ENCODE measurements at regions of chr2 and their contacts with region 1.

Region 1: DNA sequence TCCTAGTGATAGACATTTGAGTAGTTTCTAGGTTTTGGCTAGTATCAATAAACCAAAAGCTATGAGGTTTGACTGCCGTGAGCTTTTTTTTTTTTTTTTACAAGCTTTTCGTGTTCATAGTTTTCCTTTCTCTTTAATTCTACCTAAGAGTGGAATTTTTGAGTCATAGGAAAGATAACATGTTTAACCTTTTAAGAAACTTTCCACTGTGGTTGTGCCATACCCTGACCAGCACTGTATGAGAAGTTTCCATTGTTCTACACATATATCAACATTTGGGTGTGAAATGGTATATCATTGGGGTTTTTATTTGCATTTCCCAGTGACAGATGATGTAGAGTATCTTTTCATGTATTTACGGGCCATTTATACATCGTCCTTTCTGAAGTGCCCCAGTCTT is 31.7 kb downstream of the UBE2F start:
- DNase-seq: peak; percentile 80
- H3K4me3 Mint-ChIP-seq: peak overlapping the region; percentile 69
- H3K27ac Mint-ChIP-seq: peak overlapping the region; percentile 97
- H3K4me1 Mint-ChIP-seq: peaks cover 44% of the 10 kb centered on the region
- H3K27me3 Mint-ChIP-seq: peaks cover 2% of the 10 kb centered on the region

Region 2: DNA sequence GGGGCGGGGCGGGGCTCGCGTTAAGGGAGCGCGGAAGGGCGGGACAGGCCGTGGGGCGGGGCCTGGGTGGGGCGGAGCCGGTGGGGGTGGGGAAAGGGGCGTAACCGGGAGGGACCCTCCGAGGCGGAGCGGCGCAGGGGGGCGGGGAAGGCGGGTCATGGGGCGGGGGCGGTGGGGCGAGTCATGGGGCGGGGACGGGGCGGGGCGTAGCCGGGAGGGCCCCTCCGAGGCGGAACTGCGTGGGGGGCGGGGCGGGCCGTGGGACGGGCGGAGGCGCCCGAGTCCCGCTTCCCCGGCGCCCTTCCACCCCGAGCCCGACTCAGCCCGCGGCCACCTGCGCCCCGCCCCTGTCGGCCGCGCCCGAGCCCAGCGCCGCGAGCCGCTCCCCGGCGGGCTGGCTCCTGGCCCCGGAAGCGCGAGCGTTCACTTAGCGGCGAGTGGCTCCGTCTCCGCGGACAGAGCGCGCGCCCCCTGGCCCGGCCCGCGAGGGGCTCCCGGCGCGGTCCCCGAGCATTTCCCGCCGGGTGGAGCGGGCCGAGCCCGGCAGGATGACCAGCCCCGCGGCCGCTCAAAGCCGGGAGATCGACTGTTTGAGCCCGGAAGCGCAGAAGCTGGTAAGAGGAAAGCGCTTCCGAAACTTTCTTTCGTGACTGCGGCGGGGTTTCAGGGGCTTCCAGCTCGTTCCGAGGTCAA is 306.5 kb before region 1 on chr2:
- intact Hi-C with region 1: loop called (anchors 5 kb)
- DNase-seq: peak; percentile 98
- H3K4me3 Mint-ChIP-seq: peak overlapping the region; percentile 99
- H3K27ac Mint-ChIP-seq: peak overlapping the region; percentile 99
- H3K4me1 Mint-ChIP-seq: peaks cover 61% of the 10 kb centered on the region
- H3K27me3 Mint-ChIP-seq: no peaks in the 10 kb centered on the region

Region 3: GRCh38 chr2:237923481-237924163 is 74.9 kb before region 1 on chr2:
- intact Hi-C with region 1: loop called (anchors 5 kb)
- DNase-seq: peak; percentile 95
- H3K4me3 Mint-ChIP-seq: peak overlapping the region; percentile 66
- H3K27ac Mint-ChIP-seq: peak overlapping the region; percentile 86
- H3K4me1 Mint-ChIP-seq: peaks cover 37% of the 10 kb centered on the region
- H3K27me3 Mint-ChIP-seq: no peaks in the 10 kb centered on the region

Region 4: DNA sequence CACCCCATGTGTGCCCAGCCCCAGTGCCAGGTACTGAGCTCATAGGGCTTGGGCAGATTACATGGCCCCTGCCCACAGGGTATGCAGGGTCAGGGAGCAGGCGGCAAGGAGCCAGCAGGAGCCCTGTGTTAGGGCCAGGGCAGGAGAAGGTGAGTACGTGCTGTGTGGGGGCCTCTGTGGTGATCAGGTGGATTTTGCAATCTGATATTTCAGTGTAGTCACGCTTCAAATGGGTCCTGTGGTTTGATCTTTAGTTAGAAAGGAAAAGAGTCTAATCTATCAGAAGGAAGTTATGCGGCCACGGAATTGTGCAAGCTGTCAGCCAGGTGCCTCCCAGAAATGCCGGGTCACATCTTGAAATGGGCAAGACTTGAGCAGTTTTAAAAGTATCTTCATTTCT is 17.8 kb before region 1 on chr2:
- intact Hi-C with region 1: loop called (anchors 2 kb)
- DNase-seq: peak; percentile 71
- H3K4me3 Mint-ChIP-seq: peak overlapping the region; percentile 66
- H3K27ac Mint-ChIP-seq: peak overlapping the region; percentile 74
- H3K4me1 Mint-ChIP-seq: peaks cover 66% of the 10 kb centered on the region
- H3K27me3 Mint-ChIP-seq: no peaks in the 10 kb centered on the region

Region 5: DNA sequence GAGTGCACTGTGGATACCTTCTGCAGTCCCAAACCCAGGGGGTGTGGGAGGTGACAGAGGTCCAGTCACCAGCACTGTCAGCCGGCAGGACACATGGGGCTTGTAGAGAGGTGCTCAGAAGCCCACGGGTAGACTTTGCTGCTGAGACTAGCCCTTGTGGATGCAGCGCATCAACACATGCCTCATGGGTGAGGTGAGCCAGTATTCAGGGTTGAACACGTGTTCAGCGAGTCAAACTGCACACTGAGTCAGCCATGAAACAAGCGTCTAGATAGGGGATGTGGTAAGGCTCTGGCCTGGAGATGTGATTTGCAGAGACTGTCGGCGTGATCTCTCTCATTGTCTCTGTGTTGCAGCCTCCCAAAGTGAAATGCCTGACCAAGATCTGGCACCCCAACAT is 26.5 kb after region 1 on chr2:
- intact Hi-C with region 1: loop called (anchors 1 kb)
- DNase-seq: peak; percentile 72
- H3K4me3 Mint-ChIP-seq: peak overlapping the region; percentile 31
- H3K27ac Mint-ChIP-seq: peak overlapping the region; percentile 65
- H3K4me1 Mint-ChIP-seq: peaks cover 23% of the 10 kb centered on the region
- H3K27me3 Mint-ChIP-seq: no peaks in the 10 kb centered on the region

Region 6: DNA sequence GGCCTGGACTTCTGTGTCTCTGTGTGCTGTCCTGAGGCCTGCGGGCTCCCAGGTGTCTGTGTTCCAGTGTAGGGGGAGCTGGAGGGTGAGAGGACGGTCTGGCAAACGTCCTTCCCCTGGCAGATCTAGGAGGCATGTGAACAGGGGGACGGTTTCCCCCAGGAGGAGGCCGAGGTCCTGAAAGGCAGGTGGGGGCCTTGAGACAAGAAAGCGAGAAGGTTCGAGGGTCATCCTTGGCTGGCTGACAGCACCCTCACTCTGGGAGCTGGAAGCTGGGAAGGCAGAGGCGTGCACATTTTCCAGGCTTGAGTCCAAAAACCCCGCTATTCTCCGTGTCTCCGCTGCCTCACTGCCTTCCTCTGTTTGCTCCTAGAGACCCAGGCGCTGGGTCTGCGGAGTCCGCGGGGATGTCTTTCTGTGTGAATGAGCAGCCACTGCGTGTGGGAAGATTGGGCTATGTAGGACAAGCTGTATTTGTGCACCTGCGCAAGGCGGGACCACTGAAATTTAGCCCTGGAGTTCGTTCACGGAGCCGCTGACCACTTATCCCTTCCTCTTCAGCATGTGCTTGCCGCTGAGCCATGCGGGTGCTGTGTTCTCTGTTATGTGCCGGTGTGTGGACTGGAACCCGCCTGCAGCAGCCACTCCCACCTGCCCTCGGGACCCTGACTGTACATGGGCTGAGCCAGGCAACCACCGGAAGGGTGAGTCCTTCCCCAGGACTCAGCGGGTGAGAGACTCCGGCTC is 893.1 kb after region 1 on chr2:
- intact Hi-C with region 1: no loop called
- DNase-seq: no peak
- H3K4me3 Mint-ChIP-seq: no peak overlapping the region
- H3K27ac Mint-ChIP-seq: no peak overlapping the region
- H3K4me1 Mint-ChIP-seq: no peaks in the 10 kb centered on the region
- H3K27me3 Mint-ChIP-seq: no peaks in the 10 kb centered on the region

Measured in activated CD4-positive, alpha-beta T cell treated with anti-CD3 and anti-CD28 coated beads, Interleukin-2, amount 10 ng/mL, durations not matched to agents 24 days and 14 days (primary cell).